Keratinocyte (primary cell): ENCODE measurements at regions of chr4 and their contacts with region 1.

Region 1: GRCh38 chr4:118981839-118982381 is 93.3 kb downstream of the SYNPO2 start:
- DNase-seq: peak; percentile 38
- H3K4me3 ChIP-seq: no peak overlapping the region
- H3K27ac ChIP-seq: no peak overlapping the region
- H3K4me1 ChIP-seq: no peaks in the 10 kb centered on the region
- H3K27me3 ChIP-seq: no peaks in the 10 kb centered on the region
- CTCF ChIP-seq: peak; percentile 66 to 78 (median 68)

Region 2: GRCh38 chr4:119238068-119238722 is 256.3 kb after region 1 on chr4:
- dilution Hi-C with region 1: loop called (anchors 25 kb)
- DNase-seq: no peak
- H3K4me3 ChIP-seq: no peak overlapping the region
- H3K27ac ChIP-seq: no peak overlapping the region
- H3K4me1 ChIP-seq: no peaks in the 10 kb centered on the region
- H3K27me3 ChIP-seq: no peaks in the 10 kb centered on the region
- CTCF ChIP-seq: no peak